PC-9 (cell line): ENCODE measurements at regions of chr16 and their contacts with region 1.

Region 1: DNA sequence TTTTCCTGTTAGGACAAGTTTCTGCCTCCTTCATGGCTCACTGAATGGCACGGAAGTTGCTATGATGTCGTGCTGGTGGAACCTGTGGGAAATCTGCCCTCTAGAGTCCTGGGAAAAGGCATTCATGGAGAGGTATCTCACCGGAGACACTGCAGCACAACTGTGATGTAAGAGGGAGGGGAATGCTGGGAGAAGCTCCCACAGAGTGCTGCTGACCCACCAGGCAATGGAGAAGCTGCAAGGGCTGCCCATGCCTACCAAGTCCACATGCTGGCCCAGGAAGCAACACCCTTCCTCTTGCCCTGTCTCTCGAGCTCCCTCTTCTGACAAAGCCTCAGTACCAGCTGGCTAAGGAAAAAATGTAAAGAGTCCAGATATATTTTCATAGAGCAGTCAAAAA is 45.2 kb upstream of the SLC5A11 start:
- DNase-seq: peak in 1 of 2 experiments; percentile 26
- H3K4me3 ChIP-seq: no peak overlapping the region
- H3K27ac ChIP-seq: no peak overlapping the region
- H3K4me1 ChIP-seq: no peaks in the 10 kb centered on the region
- H3K27me3 ChIP-seq: no peaks in the 10 kb centered on the region
- CTCF ChIP-seq: peak; percentile 65

Region 2: GRCh38 chr16:24562811-24563210 is 237.8 kb before region 1 on chr16:
- CTCF ChIA-PET with region 1: interaction called, 3 read pairs
- POLR2A ChIA-PET with region 1: interaction called, 10 read pairs
- intact Hi-C with region 1: loop called (anchors 5 kb)
- DNase-seq: no peak
- H3K4me3 ChIP-seq: no peak overlapping the region
- H3K27ac ChIP-seq: no peak overlapping the region
- H3K4me1 ChIP-seq: no peaks in the 10 kb centered on the region
- H3K27me3 ChIP-seq: no peaks in the 10 kb centered on the region
- CTCF ChIP-seq: no peak

Region 3: DNA sequence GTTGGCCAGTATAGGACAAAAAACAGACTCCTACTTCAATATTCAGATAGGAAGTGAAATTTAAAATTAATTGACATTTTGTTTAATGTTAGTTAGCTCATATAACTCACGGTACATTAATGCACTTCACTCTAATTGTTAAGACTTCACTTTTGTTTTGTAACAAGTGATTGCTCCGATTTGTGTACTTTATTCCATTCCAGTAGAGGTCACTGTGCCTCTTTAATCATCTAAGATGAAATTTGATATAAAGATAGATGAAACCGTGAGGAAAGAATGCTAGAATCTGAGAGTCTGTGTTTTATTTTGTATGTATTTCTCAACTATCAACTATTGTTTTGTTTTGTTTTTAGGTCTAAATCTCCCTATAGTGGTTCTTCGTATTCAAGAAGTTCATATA is 232.2 kb before region 1 on chr16:
- CTCF ChIA-PET with region 1: interaction called, 3 read pairs
- POLR2A ChIA-PET with region 1: no interaction called
- intact Hi-C with region 1: loop called (anchors 5 kb)
- DNase-seq: peak in 1 of 2 experiments; percentile 44
- H3K4me3 ChIP-seq: no peak overlapping the region
- H3K27ac ChIP-seq: no peak overlapping the region
- H3K4me1 ChIP-seq: no peaks in the 10 kb centered on the region
- H3K27me3 ChIP-seq: no peaks in the 10 kb centered on the region
- CTCF ChIP-seq: peak; percentile 59

Region 4: GRCh38 chr16:24580665-24581064 is 219.9 kb before region 1 on chr16:
- CTCF ChIA-PET with region 1: interaction called, 8 read pairs
- POLR2A ChIA-PET with region 1: no interaction called
- intact Hi-C with region 1: loop called (anchors 1 kb)
- DNase-seq: no peak
- H3K4me3 ChIP-seq: no peak overlapping the region
- H3K27ac ChIP-seq: no peak overlapping the region
- H3K4me1 ChIP-seq: peaks cover 7% of the 10 kb centered on the region
- H3K27me3 ChIP-seq: no peaks in the 10 kb centered on the region
- CTCF ChIP-seq: peak; percentile 68